ENCODE measurements at regions of chr21 and their contacts with region 1.

Region 1: DNA sequence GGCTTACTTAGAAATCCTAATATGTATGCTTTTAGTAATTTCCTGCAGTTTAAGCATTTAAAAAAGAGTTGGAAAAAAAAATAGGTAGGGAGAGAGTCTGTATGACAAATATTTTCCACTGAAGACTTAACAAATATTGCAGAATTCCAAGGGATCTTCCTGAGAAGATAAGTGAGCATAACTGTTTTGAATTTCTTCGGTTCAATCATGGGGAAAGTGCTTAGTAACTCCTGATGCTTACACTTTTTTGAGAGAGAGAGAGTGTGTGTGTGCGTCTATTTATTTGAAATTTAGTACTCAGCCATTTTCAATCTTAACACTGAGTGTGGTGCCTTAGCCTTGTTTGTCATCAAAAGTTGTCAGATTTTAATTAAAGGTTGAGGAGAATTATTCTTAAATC is 18.5 kb downstream of the SON start:
- DNase-seq: no peak
- ATAC-seq: no peak
- H3K4me3 ChIP-seq: no peak overlapping the region
- H3K4me3 Mint-ChIP-seq: no peak overlapping the region
- H3K27ac ChIP-seq: no peak overlapping the region
- H3K27ac Mint-ChIP-seq: peak overlapping the region; percentile 47
- H3K4me1 ChIP-seq: peaks cover 19% of the 10 kb centered on the region
- H3K4me1 Mint-ChIP-seq: peaks cover 65% of the 10 kb centered on the region
- H3K27me3 ChIP-seq: no peaks in the 10 kb centered on the region
- H3K27me3 Mint-ChIP-seq: no peaks in the 10 kb centered on the region
- CTCF ChIP-seq: no peak

Region 2: DNA sequence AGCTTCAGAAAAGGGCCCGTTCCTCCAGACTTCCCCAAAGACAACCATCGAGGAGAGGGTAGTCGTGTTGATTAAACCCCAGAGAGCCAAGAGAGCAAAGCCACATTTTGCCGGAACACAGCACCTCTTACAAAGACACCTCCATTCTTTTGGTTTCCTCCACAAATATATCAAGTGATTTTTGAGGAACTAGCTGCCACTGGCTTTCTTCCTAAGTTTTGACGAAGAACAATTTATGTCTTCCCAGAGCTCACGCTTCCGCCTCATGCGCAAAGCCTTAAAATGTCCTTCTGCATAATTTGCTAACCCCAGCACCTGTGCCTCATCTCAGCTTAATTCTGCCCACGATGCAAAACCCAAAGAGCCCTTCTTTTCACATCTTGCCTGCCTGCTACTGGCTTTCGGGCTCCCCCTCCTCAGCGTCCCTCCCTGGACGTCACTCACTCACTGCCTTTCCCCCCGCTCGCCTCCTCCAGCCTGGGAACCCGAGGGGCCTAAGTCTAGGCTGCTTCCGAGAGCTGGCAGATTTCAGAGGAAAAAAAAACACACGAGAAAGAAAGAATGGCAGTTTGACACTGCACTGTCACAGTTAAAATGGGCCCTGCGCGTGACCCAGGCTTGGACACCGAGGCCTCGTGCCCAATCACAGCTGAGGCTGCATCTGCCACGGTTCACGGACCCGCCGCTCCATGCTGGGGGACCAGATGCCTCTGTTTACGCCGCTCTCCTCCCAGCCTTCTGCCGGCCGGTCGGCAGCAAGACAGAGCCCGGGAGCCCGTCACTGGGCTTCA is 409.2 kb before region 1 on chr21:
- CTCF ChIA-PET with region 1: no interaction called
- POLR2A ChIA-PET with region 1: no interaction called
- intact Hi-C with region 1: no loop called
- DNase-seq: no peak
- ATAC-seq: no peak
- H3K4me3 ChIP-seq: no peak overlapping the region
- H3K4me3 Mint-ChIP-seq: peak overlapping the region; percentile 26
- H3K27ac ChIP-seq: no peak overlapping the region
- H3K27ac Mint-ChIP-seq: no peak overlapping the region
- H3K4me1 ChIP-seq: no peaks in the 10 kb centered on the region
- H3K4me1 Mint-ChIP-seq: peaks cover 6% of the 10 kb centered on the region
- H3K27me3 ChIP-seq: peaks cover 0 to 5% of the 10 kb centered on the region in 2 experiments
- H3K27me3 Mint-ChIP-seq: peaks cover 32% of the 10 kb centered on the region
- CTCF ChIP-seq: no peak

Region 3: GRCh38 chr21:33572350-33572749 is 11.0 kb after region 1 on chr21:
- CTCF ChIA-PET with region 1: no interaction called
- POLR2A ChIA-PET with region 1: interaction called, 5 read pairs
- intact Hi-C with region 1: loop called in 1 of 2 experiments (anchors 2 kb)
- DNase-seq: no peak
- ATAC-seq: no peak
- H3K4me3 ChIP-seq: no peak overlapping the region
- H3K4me3 Mint-ChIP-seq: no peak overlapping the region
- H3K27ac ChIP-seq: peak overlapping the region in 1 of 2 experiments; percentile 0
- H3K27ac Mint-ChIP-seq: peak overlapping the region; percentile 20
- H3K4me1 ChIP-seq: no peaks in the 10 kb centered on the region
- H3K4me1 Mint-ChIP-seq: peaks cover 30% of the 10 kb centered on the region
- H3K27me3 ChIP-seq: no peaks in the 10 kb centered on the region
- H3K27me3 Mint-ChIP-seq: no peaks in the 10 kb centered on the region
- CTCF ChIP-seq: no peak

Region 4: GRCh38 chr21:33947451-33948095 is 386.2 kb after region 1 on chr21:
- CTCF ChIA-PET with region 1: no interaction called
- POLR2A ChIA-PET with region 1: no interaction called
- intact Hi-C with region 1: no loop called
- DNase-seq: peak; percentile 64 to 97 (median 82)
- ATAC-seq: peak; percentile 56
- H3K4me3 ChIP-seq: peak overlapping the region; percentile 18 to 25
- H3K4me3 Mint-ChIP-seq: peak overlapping the region; percentile 75
- H3K27ac ChIP-seq: peak overlapping the region; percentile 94 to 95
- H3K27ac Mint-ChIP-seq: peak overlapping the region; percentile 99
- H3K4me1 ChIP-seq: peaks cover 66% of the 10 kb centered on the region
- H3K4me1 Mint-ChIP-seq: peaks cover 78% of the 10 kb centered on the region
- H3K27me3 ChIP-seq: no peaks in the 10 kb centered on the region
- H3K27me3 Mint-ChIP-seq: no peaks in the 10 kb centered on the region
- CTCF ChIP-seq: no peak